H1 (cell line): ENCODE measurements at regions of chr3 and their contacts with region 1.

Region 1: DNA sequence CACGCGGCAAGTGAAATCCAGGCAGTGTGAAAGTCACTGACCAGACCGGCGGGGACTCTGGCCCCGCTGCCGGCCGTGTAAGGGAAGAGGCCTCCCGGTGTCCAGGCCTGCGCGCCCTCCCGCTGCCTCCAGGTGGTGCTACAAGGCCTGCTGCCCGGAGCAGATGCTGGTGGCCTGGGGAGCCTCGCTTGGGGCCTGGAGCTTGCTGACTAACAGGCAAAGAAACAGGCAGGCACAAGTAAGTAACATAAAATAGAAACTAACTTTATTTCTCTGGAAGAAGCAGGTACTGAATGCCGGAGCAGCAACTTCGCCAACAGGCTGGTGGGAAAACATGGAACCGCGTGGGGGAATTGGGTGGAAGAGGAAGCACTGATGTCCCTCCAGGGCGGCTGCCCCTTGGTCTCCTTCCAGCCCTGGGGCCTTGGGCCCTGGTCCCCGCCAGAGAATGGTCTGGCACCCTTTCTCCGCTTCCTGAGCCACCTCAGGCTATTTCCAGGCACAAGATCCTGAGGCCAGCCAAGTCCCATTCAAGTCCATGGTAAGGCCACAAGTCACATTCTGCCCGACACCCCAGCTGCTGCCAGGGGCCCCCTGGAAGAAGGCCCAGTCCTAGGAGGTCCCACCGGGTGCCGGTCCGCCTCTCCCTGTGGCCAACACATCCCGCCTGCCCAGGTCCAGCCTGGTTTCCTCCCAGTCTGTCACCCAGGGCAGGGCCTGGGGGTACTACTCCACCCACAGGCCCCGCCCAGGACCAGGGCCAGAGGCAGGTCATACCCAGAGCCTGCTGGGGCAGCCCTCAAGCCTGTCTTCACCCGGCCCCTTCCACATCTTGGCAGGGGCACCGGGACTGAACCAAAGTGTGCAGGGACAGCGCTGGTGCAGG is 45.0 kb downstream of the TNK2 start:
- DNase-seq: peak; percentile 63 to 92
- H3K4me3 ChIP-seq: no peak overlapping the region
- H3K27ac ChIP-seq: no peak overlapping the region
- H3K4me1 ChIP-seq: no peaks in the 10 kb centered on the region; a peak in 2 of 7 replicates
- H3K27me3 ChIP-seq: no peaks in the 10 kb centered on the region; a peak in 1 of 7 replicates
- CTCF ChIP-seq: peak in 2 of 3 experiments; percentile 89 to 96; a peak in 3 of 4 replicates
- EP300 ChIP-seq: no peak
- POLR2A ChIP-seq: no peak
- RAD21 ChIP-seq: peak; percentile 88 to 92

Region 2: DNA sequence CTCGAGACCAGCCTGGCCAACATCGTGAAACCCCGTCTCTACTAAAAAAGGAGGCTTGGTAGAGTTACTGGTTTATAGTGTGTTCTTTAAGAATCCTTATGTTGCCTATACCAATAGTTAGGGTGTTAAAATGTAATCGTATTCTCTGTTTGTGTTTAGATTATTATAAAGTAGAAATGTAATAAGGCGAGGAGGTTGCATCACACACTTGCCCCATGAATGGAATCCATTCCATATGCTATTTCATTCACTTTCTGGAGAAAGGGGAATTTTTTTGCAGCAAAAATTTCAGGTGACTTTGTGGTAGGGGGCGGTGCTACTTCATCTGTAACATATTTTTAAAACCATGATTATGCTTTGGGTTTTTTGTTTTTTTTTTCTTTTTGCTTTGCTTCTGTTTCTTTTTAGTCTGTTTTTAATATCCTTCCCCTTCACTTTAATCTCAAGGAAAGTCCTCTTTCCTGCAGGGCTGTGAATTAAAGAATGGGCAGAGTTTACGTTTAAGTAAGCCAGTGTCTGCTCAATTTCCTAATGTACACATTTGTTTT is 18.6 kb before region 1 on chr3:
- CTCF ChIA-PET with region 1: interaction called, 18 read pairs
- POLR2A ChIA-PET with region 1: interaction called, 3 read pairs
- DNase-seq: no peak
- H3K4me3 ChIP-seq: no peak overlapping the region
- H3K27ac ChIP-seq: no peak overlapping the region
- H3K4me1 ChIP-seq: peaks cover 0 to 1% (median under 1%) of the 10 kb centered on the region in 4 experiments; a peak in 4 of 7 replicates
- H3K27me3 ChIP-seq: no peaks in the 10 kb centered on the region
- CTCF ChIP-seq: no peak
- EP300 ChIP-seq: no peak
- POLR2A ChIP-seq: no peak
- RAD21 ChIP-seq: no peak

Region 3: DNA sequence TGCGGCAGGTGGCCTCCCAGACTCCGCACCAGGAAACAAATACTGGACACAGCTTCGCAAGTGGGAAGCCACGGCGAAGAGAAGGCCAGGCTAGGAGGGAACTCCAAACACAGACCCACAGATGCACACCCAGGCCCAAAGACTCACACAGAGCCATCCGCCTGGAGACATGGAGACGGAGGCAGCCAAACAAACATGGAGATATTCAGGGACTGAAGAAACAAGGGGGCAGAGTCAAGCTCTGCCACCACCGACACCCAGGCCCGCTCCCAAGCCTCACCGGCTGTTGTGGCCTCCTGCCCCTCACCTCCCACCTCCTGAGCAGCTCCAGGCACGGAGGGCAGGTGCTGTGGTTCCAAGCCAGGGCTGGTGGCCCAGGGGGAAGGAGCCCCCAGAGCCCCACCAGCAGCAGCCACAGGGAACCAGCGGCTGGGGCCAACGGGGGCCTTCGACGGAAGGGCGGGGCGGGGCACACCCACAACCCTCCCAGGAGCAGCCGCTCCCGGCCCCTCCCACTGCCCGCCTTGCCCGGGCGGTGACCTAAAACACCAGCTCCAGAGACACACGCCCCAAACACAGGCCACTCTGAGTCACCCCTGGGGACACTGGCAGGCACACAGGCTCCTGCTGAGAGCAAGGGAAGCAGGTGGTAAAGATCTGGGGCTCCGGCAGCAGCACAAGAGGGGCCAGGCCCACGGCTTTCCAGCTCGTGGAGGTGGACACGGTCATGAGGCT is 13.1 kb after region 1 on chr3:
- CTCF ChIA-PET with region 1: interaction called, 499 read pairs
- POLR2A ChIA-PET with region 1: no interaction called
- DNase-seq: no peak
- H3K4me3 ChIP-seq: no peak overlapping the region
- H3K27ac ChIP-seq: no peak overlapping the region; the same call in 1 of the 2 replicates
- H3K4me1 ChIP-seq: no peaks in the 10 kb centered on the region; a peak in 1 of 7 replicates
- H3K27me3 ChIP-seq: no peaks in the 10 kb centered on the region
- CTCF ChIP-seq: no peak
- EP300 ChIP-seq: no peak
- POLR2A ChIP-seq: no peak
- RAD21 ChIP-seq: no peak

Region 4: GRCh38 chr3:195907934-195908693 is 44.8 kb after region 1 on chr3 and contains the start of gene TNK2:
- CTCF ChIA-PET with region 1: interaction called, 499 read pairs
- POLR2A ChIA-PET with region 1: no interaction called
- DNase-seq: peak in 1 of 2 experiments; percentile 75
- H3K4me3 ChIP-seq: peak within 1 kb of the TSS; percentile 69 to 79 (median 74)
- H3K27ac ChIP-seq: no peak within 1 kb of the TSS
- H3K4me1 ChIP-seq: peaks cover 7 to 20% (median 16%) of the 10 kb centered on the region in 4 experiments; a peak in 6 of 7 replicates
- H3K27me3 ChIP-seq: peaks cover 0 to 15% (median 5%) of the 10 kb centered on the region in 4 experiments; a peak in 5 of 7 replicates
- CTCF ChIP-seq: no peak
- EP300 ChIP-seq: no peak
- POLR2A ChIP-seq: no peak
- RAD21 ChIP-seq: no peak
- total RNA-seq, gene TNK2: 33.9 and 38.6 TPM in 2 replicates

Region 5: GRCh38 chr3:195914648-195915473 is 51.5 kb after region 1 on chr3:
- CTCF ChIA-PET with region 1: interaction called, 37 read pairs
- POLR2A ChIA-PET with region 1: interaction called, 5 read pairs
- DNase-seq: peak; percentile 97
- H3K4me3 ChIP-seq: peak overlapping the region in 2 of 4 experiments; percentile 14 to 31; a peak in 2 of 8 replicates
- H3K27ac ChIP-seq: peak overlapping the region; percentile 57
- H3K4me1 ChIP-seq: peaks cover 7 to 13% (median 11%) of the 10 kb centered on the region in 4 experiments
- H3K27me3 ChIP-seq: peaks cover 0 to 6% (median 4%) of the 10 kb centered on the region in 4 experiments; a peak in 4 of 7 replicates
- CTCF ChIP-seq: peak in 2 of 3 experiments; percentile 93 to 99; a peak in 3 of 4 replicates
- EP300 ChIP-seq: no peak
- POLR2A ChIP-seq: peak in 1 of 2 experiments; percentile 70; a peak in 1 of 3 replicates
- RAD21 ChIP-seq: peak; percentile 80 to 88